SK-N-SH (cell line): ENCODE measurements at regions of chr11 and their contacts with region 1.

Region 1: DNA sequence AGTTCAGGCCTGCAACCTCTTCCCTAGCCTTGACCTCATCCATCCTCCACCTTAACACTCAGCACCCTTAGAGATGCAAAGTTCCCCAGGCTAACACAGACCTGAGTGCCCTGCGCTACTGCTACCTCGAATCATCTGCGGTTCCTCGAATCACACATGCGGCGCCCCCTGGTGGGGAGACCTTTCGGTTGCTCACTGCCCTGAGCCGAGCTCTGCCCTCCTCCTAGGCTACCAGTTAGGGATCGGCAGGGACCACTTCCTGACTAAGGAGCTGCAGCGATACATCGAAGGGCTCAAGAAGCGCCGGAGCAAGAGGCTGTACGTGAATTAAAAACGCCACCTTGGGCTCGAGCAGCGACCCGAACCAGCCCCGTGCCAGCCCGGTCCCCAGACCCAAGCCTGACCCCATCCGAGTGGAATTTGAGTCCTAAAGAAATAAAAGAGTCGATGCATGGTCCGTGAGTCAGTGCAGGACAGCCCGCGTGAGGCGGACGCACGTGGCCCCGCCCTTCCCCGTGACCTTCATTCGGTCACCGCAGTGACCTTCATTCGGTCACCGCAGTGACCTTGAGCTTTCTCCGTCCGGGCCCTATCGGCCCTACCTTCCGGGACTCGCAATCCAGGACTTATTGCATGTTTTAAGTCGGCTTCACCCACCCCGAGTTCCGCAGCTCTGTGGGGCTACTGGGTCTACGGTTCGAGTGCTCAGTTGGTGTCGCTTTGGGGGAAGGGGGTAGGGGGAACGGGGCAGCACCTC is 830 bp upstream of the ESRRA start:
- DNase-seq: peak; percentile 88
- H3K4me3 ChIP-seq: peak overlapping the region; percentile 67 to 82
- H3K27ac ChIP-seq: peak overlapping the region; percentile 83 to 96
- H3K4me1 ChIP-seq: peaks cover 5 to 18% of the 10 kb centered on the region in 2 experiments; a peak in 2 of 4 replicates
- H3K27me3 ChIP-seq: no peaks in the 10 kb centered on the region
- CTCF ChIP-seq: peak; percentile 96
- EP300 ChIP-seq: no peak
- RAD21 ChIP-seq: peak; percentile 64

Region 2: DNA sequence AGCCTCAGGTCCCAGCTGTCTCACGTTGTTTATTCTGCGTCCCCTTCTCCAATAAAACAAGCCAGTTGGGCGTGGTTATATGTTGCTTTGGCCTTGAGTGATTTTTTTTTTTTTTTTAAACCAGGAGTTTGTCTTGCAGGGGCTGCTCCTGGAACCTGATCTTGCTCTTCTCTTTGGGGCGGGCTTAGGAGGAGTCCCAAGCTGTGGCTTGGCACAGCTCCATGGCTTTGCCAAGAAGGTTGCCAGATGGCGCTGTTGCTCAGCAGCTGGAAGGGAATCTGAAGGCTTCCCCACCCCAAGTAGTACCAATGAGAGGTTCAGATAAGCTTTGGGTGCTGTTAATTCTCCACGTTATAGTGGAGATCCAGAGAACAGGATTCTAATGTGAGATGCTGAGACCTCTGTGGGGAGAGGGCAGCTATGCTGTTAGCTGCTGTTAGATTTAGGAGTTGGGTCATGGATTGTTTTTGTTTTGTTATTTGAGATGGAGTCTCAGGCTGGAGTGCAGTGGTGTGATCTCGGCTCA is 100.0 kb before region 1 on chr11:
- CTCF ChIA-PET with region 1: interaction called, 52 read pairs
- POLR2A ChIA-PET with region 1: interaction called, 4 read pairs
- DNase-seq: peak; percentile 89
- H3K4me3 ChIP-seq: no peak overlapping the region
- H3K27ac ChIP-seq: peak overlapping the region in 1 of 2 experiments; percentile 6; a peak in 1 of 4 replicates
- H3K4me1 ChIP-seq: peaks cover 4 to 27% of the 10 kb centered on the region in 2 experiments; a peak in 3 of 4 replicates
- H3K27me3 ChIP-seq: no peaks in the 10 kb centered on the region
- CTCF ChIP-seq: peak; percentile 85
- EP300 ChIP-seq: no peak
- RAD21 ChIP-seq: peak; percentile 84

Region 3: GRCh38 chr11:64246871-64247728 is 57.4 kb before region 1 on chr11 and contains the start of gene PPP1R14B:
- CTCF ChIA-PET with region 1: interaction called, 53 read pairs
- POLR2A ChIA-PET with region 1: interaction called, 5 read pairs
- DNase-seq: peak; percentile 95
- H3K4me3 ChIP-seq: peak within 1 kb of the TSS; percentile 92 to 98
- H3K27ac ChIP-seq: peak within 1 kb of the TSS; percentile 96 to 98
- H3K4me1 ChIP-seq: peaks cover 9 to 46% of the 10 kb centered on the region in 2 experiments; a peak in 2 of 4 replicates
- H3K27me3 ChIP-seq: no peaks in the 10 kb centered on the region
- CTCF ChIP-seq: no peak; the same call in 1 of the 2 replicates
- EP300 ChIP-seq: no peak
- RAD21 ChIP-seq: no peak
- polyA plus RNA-seq, gene PPP1R14B: 373 and 523 TPM in 2 replicates

Region 4: GRCh38 chr11:64276653-64277431 is 27.7 kb before region 1 on chr11:
- CTCF ChIA-PET with region 1: interaction called, 196 read pairs
- POLR2A ChIA-PET with region 1: interaction called, 54 read pairs
- DNase-seq: no peak
- H3K4me3 ChIP-seq: no peak overlapping the region
- H3K27ac ChIP-seq: no peak overlapping the region
- H3K4me1 ChIP-seq: peaks cover 0 to 8% of the 10 kb centered on the region in 2 experiments; a peak in 1 of 4 replicates
- H3K27me3 ChIP-seq: no peaks in the 10 kb centered on the region
- CTCF ChIP-seq: no peak
- EP300 ChIP-seq: no peak
- RAD21 ChIP-seq: no peak

Region 5: DNA sequence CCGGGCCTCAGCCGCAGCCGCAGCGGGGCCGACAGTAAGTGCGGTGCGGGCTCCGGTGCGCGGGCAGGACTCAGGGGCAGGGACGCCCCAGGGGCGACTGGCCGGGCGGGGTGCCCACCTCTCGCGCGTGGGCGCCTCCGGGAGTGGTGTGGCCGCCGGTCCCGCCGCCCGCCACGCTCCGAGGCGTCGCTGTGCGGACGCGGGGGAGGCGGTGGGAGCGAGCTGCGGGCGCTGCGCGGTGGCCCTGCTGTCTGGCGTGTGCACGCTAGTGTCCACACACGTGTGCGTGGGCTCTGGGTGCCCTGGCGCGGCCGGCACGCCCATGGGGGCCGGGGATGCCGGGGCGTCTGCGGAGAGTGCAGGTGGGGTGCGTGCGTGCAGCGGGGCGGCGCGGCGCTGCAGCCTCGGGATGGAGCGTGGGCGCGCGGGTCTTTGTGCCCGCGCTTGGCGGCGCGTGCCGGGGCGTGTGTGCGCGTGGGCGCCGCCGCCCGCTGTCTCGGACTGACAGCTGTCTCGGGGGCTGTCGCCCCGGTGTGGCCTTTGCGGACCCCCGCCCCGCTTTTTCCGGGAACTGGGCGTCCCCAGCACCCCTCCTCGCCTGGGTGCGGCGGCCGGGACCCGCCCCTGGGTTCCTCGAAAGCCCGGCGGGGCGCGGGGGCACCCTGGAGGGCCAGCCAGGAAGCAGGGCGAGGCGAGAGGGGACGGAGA is 12.6 kb before region 1 on chr11:
- CTCF ChIA-PET with region 1: interaction called, 196 read pairs
- POLR2A ChIA-PET with region 1: interaction called, 3 read pairs
- DNase-seq: peak; percentile 68
- H3K4me3 ChIP-seq: peak overlapping the region; percentile 39 to 48; a peak in 3 of 4 replicates
- H3K27ac ChIP-seq: no peak overlapping the region
- H3K4me1 ChIP-seq: peaks cover 0 to 11% of the 10 kb centered on the region in 2 experiments; a peak in 1 of 4 replicates
- H3K27me3 ChIP-seq: peaks cover 20% of the 10 kb centered on the region
- CTCF ChIP-seq: no peak
- EP300 ChIP-seq: no peak
- RAD21 ChIP-seq: no peak

Region 6: GRCh38 chr11:64355078-64355940 is 50.8 kb after region 1 on chr11:
- CTCF ChIA-PET with region 1: interaction called, 19 read pairs
- POLR2A ChIA-PET with region 1: no interaction called
- DNase-seq: peak; percentile 89
- H3K4me3 ChIP-seq: peak overlapping the region; percentile 18 to 40; a peak in 2 of 4 replicates
- H3K27ac ChIP-seq: peak overlapping the region; percentile 34 to 36; a peak in 3 of 4 replicates
- H3K4me1 ChIP-seq: peaks cover 20 to 28% of the 10 kb centered on the region in 2 experiments; a peak in 3 of 4 replicates
- H3K27me3 ChIP-seq: no peaks in the 10 kb centered on the region
- CTCF ChIP-seq: peak; percentile 74
- EP300 ChIP-seq: no peak
- RAD21 ChIP-seq: peak; percentile 65

Region 7: GRCh38 chr11:64472593-64473455 is 168.3 kb after region 1 on chr11:
- CTCF ChIA-PET with region 1: no interaction called
- POLR2A ChIA-PET with region 1: no interaction called
- DNase-seq: no peak
- H3K4me3 ChIP-seq: no peak overlapping the region
- H3K27ac ChIP-seq: no peak overlapping the region
- H3K4me1 ChIP-seq: no peaks in the 10 kb centered on the region; a peak in 1 of 4 replicates
- H3K27me3 ChIP-seq: 0 out of 2 replicates have a peak, but pooled peaks cover 11% of the 10 kb centered on the region
- CTCF ChIP-seq: no peak
- EP300 ChIP-seq: no peak
- RAD21 ChIP-seq: no peak